Endothelial cell of umbilical vein (primary cell): ENCODE measurements at regions of chr7 and their contacts with region 1.

Region 1: GRCh38 chr7:117715784-117716445 is 157.3 kb downstream of the CTTNBP2 start:
- DNase-seq: peak; percentile 64
- H3K4me3 ChIP-seq: no peak overlapping the region
- H3K27ac ChIP-seq: no peak overlapping the region
- H3K4me1 ChIP-seq: no peaks in the 10 kb centered on the region
- H3K27me3 ChIP-seq: peaks cover 0 to 2% of the 10 kb centered on the region in 2 experiments
- CTCF ChIP-seq: peak; percentile 41 to 62
- POLR2A ChIP-seq: no peak

Region 2: GRCh38 chr7:117399820-117400422 is 316.0 kb before region 1 on chr7:
- CTCF ChIA-PET with region 1: interaction called, 52 read pairs
- POLR2A ChIA-PET with region 1: no interaction called
- dilution Hi-C with region 1: no loop called
- intact Hi-C with region 1: loop called (anchors 1 kb)
- DNase-seq: no peak
- H3K4me3 ChIP-seq: no peak overlapping the region
- H3K27ac ChIP-seq: no peak overlapping the region
- H3K4me1 ChIP-seq: no peaks in the 10 kb centered on the region
- H3K27me3 ChIP-seq: peaks cover 4 to 6% of the 10 kb centered on the region in 2 experiments
- CTCF ChIP-seq: peak in 1 of 2 donors; percentile 13
- POLR2A ChIP-seq: no peak

Region 3: GRCh38 chr7:117673839-117674238 is 42.1 kb before region 1 on chr7:
- CTCF ChIA-PET with region 1: interaction called, 6 read pairs
- POLR2A ChIA-PET with region 1: no interaction called
- dilution Hi-C with region 1: no loop called
- intact Hi-C with region 1: loop called (anchors 5 kb)
- DNase-seq: peak; percentile 56
- H3K4me3 ChIP-seq: no peak overlapping the region
- H3K27ac ChIP-seq: no peak overlapping the region
- H3K4me1 ChIP-seq: no peaks in the 10 kb centered on the region
- H3K27me3 ChIP-seq: peaks cover 0 to 2% of the 10 kb centered on the region in 2 experiments
- CTCF ChIP-seq: peak; percentile 16 to 28
- POLR2A ChIP-seq: no peak

Region 4: DNA sequence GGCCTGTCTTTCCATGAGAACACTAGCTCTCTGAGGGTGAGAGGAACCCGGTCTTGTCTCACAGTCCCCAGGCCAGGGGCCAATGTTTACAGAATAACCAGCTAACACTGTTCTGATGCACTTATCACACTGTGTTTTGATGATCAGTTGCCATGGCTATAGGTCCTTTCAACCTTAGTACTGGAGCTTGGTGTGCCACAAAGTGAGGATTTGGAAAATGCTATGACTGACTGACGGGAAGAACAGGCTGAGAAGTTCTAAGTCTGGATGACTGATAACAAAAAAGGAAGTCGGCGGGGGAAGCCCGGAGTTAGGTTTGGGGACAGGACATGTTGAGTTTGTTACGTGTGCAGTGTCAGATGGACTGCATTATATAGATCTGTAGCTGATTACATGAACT is 15.5 kb after region 1 on chr7:
- CTCF ChIA-PET with region 1: interaction called, 10 read pairs
- POLR2A ChIA-PET with region 1: no interaction called
- dilution Hi-C with region 1: no loop called
- intact Hi-C with region 1: no loop called
- DNase-seq: no peak
- H3K4me3 ChIP-seq: no peak overlapping the region
- H3K27ac ChIP-seq: no peak overlapping the region
- H3K4me1 ChIP-seq: no peaks in the 10 kb centered on the region
- H3K27me3 ChIP-seq: no peaks in the 10 kb centered on the region
- CTCF ChIP-seq: no peak
- POLR2A ChIP-seq: no peak